Naive thymus-derived CD4-positive, alpha-beta T cell (primary cell): ENCODE measurements at regions of chr18 and their contacts with region 1.

Region 1: GRCh38 chr18:12883684-12884405 is at the start of gene PTPN2:
- DNase-seq: peak; percentile 92 to 95 (median 94)
- ATAC-seq: peak; percentile 91
- H3K4me3 ChIP-seq: peak within 1 kb of the TSS; percentile 89
- H3K4me3 Mint-ChIP-seq: peak within 1 kb of the TSS; percentile 91 to 98 (median 96)
- H3K27ac ChIP-seq: peak within 1 kb of the TSS; percentile 99
- H3K27ac Mint-ChIP-seq: peak within 1 kb of the TSS; percentile 93 to 99 (median 96)
- H3K4me1 ChIP-seq: peaks cover 31 to 33% of the 10 kb centered on the region in 2 donors
- H3K4me1 Mint-ChIP-seq: peaks cover 43 to 69% (median 60%) of the 10 kb centered on the region in 7 donors
- H3K27me3 ChIP-seq: no peaks in the 10 kb centered on the region
- H3K27me3 Mint-ChIP-seq: no peaks in the 10 kb centered on the region
- total RNA-seq, gene PTPN2: 55.8 to 82.2 (median 76.2) TPM

Region 2: DNA sequence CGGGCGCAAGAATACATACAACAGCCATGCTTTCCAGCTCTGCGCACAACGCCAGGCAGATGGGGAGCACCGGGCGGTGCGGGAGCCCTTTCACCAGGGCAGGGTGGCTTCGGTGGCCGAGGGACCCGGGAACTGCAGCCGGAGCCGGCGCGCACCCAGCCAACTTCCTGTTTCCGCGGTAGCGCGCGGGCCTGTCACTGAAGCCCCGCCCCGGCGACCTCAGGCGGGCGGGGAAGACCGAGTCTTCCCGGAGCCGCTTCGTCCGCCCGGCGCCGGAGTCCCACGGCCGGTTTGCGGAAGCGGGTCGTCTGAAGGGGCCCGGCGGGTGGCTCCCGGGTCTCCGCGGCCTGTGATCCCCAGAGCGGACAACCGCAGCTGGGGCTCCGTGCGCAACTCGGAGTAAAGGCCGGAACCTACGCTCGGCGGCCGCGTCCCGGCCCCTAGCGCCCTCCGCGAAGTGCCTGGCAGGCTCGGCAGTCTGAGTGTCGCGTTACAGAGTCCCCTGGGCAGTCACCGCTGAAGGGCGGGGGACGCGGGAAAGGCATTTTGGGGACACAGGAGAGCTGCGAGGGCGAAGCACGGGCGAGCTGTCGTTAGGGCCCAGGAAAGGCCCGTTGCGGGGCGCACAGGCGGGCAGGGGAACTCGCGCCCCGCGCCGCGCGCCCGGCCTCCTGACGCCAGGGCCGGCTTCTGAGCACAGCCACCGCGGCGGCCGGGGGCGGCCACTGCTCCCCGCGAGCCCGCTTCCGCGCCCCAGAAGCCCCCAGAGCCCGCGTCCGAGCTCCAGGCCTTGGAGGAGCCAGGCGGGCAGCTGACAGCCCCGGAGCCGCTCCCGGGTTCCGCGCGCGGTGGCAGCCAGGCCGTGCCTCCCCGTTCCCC is 975.4 kb before region 1 on chr18 and contains the start of gene MPPE1:
- CTCF ChIA-PET with region 1: no interaction called
- POLR2A ChIA-PET with region 1: interaction called, 3 read pairs
- intact Hi-C with region 1: loop called in 1 of 2 experiments (anchors 10 kb)
- DNase-seq: peak; percentile 77 to 88 (median 83)
- ATAC-seq: peak; percentile 95
- H3K4me3 ChIP-seq: peak within 1 kb of the TSS; percentile 94
- H3K4me3 Mint-ChIP-seq: peak within 1 kb of the TSS; percentile 90 to 97 (median 96)
- H3K27ac ChIP-seq: peak within 1 kb of the TSS; percentile 97
- H3K27ac Mint-ChIP-seq: peak within 1 kb of the TSS; percentile 93 to 97 (median 95)
- H3K4me1 ChIP-seq: peaks cover 8 to 9% of the 10 kb centered on the region in 2 donors
- H3K4me1 Mint-ChIP-seq: peaks cover 10 to 32% (median 24%) of the 10 kb centered on the region in 7 donors
- H3K27me3 ChIP-seq: no peaks in the 10 kb centered on the region
- H3K27me3 Mint-ChIP-seq: no peaks in the 10 kb centered on the region
- total RNA-seq, gene MPPE1: 61.9 to 88.0 (median 86.2) TPM

Region 3: GRCh38 chr18:12702221-12703095 is 181.4 kb before region 1 on chr18 and contains the starts of genes CEP76 and PSMG2:
- CTCF ChIA-PET with region 1: no interaction called
- POLR2A ChIA-PET with region 1: interaction called, 15 read pairs
- intact Hi-C with region 1: loop called (anchors 1 to 2 kb)
- DNase-seq: peak; percentile 77 to 88 (median 84)
- ATAC-seq: peak; percentile 89
- H3K4me3 ChIP-seq: peak within 1 kb of the TSS; percentile 97
- H3K4me3 Mint-ChIP-seq: peak within 1 kb of the TSS; percentile 92 to 99 (median 98)
- H3K27ac ChIP-seq: peak within 1 kb of the TSS; percentile 96
- H3K27ac Mint-ChIP-seq: peak within 1 kb of the TSS; percentile 91 to 100 (median 96)
- H3K4me1 ChIP-seq: peaks cover 17 to 20% of the 10 kb centered on the region in 2 donors
- H3K4me1 Mint-ChIP-seq: peaks cover 36 to 63% (median 50%) of the 10 kb centered on the region in 7 donors
- H3K27me3 ChIP-seq: no peaks in the 10 kb centered on the region
- H3K27me3 Mint-ChIP-seq: no peaks in the 10 kb centered on the region
- total RNA-seq, gene CEP76: 6.9 to 13.2 (median 11.1) TPM
- total RNA-seq, gene PSMG2: 49.9 to 104 (median 59.9) TPM

Region 4: DNA sequence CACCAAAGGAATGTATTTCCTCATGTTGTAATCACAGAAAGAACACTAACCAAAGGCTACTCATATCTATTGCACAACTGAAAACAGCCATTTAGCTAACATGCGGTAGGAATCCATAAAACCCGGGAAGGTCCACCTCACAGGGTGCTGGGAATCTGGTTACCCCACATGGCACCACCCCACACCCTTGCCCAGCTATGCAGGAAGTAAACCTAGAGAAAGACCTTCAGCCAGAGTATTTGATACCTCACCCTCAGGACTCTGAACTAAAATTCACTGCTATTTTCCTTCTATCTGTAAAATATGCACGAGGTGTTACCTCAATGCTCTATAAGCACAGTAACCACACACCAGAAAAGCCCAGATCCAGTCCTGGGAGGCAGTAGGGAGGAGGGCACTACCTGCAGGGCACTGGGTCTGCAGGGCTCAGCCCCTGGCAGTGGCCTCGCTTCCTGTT is 45.6 kb before region 1 on chr18:
- CTCF ChIA-PET with region 1: no interaction called
- POLR2A ChIA-PET with region 1: no interaction called
- intact Hi-C with region 1: loop called (anchors 1 kb)
- DNase-seq: peak in 1 of 9 donors; percentile 28
- ATAC-seq: no peak
- H3K4me3 ChIP-seq: peak overlapping the region; percentile 15
- H3K4me3 Mint-ChIP-seq: peak overlapping the region; percentile 26 to 86 (median 54)
- H3K27ac ChIP-seq: no peak overlapping the region
- H3K27ac Mint-ChIP-seq: peak overlapping the region; percentile 28 to 98 (median 57)
- H3K4me1 ChIP-seq: peaks cover 31 to 34% of the 10 kb centered on the region in 2 donors
- H3K4me1 Mint-ChIP-seq: peaks cover 31 to 67% (median 57%) of the 10 kb centered on the region in 7 donors
- H3K27me3 ChIP-seq: no peaks in the 10 kb centered on the region
- H3K27me3 Mint-ChIP-seq: no peaks in the 10 kb centered on the region

Region 5: GRCh38 chr18:12990967-12991838 is 107.4 kb after region 1 on chr18 and contains the start of gene CEP192:
- CTCF ChIA-PET with region 1: no interaction called
- POLR2A ChIA-PET with region 1: interaction called, 7 read pairs
- intact Hi-C with region 1: loop called (anchors 1 kb)
- DNase-seq: peak; percentile 90 to 99 (median 97)
- ATAC-seq: peak; percentile 99
- H3K4me3 ChIP-seq: peak within 1 kb of the TSS; percentile 85
- H3K4me3 Mint-ChIP-seq: peak within 1 kb of the TSS in 9 of 10 donors; percentile 90 to 99 (median 98)
- H3K27ac ChIP-seq: peak within 1 kb of the TSS; percentile 82
- H3K27ac Mint-ChIP-seq: peak within 1 kb of the TSS; percentile 88 to 97 (median 93)
- H3K4me1 ChIP-seq: peaks cover 27 to 29% of the 10 kb centered on the region in 2 donors
- H3K4me1 Mint-ChIP-seq: peaks cover 10 to 29% (median 20%) of the 10 kb centered on the region in 7 donors
- H3K27me3 ChIP-seq: no peaks in the 10 kb centered on the region
- H3K27me3 Mint-ChIP-seq: peaks cover 0 to 1% (median 0%) of the 10 kb centered on the region in 5 donors
- total RNA-seq, gene CEP192: 30.9 to 45.0 (median 39.7) TPM